Adrenal gland (tissue), 19 donors: ENCODE measurements at regions of chr12 and their contacts with region 1.

Region 1: DNA sequence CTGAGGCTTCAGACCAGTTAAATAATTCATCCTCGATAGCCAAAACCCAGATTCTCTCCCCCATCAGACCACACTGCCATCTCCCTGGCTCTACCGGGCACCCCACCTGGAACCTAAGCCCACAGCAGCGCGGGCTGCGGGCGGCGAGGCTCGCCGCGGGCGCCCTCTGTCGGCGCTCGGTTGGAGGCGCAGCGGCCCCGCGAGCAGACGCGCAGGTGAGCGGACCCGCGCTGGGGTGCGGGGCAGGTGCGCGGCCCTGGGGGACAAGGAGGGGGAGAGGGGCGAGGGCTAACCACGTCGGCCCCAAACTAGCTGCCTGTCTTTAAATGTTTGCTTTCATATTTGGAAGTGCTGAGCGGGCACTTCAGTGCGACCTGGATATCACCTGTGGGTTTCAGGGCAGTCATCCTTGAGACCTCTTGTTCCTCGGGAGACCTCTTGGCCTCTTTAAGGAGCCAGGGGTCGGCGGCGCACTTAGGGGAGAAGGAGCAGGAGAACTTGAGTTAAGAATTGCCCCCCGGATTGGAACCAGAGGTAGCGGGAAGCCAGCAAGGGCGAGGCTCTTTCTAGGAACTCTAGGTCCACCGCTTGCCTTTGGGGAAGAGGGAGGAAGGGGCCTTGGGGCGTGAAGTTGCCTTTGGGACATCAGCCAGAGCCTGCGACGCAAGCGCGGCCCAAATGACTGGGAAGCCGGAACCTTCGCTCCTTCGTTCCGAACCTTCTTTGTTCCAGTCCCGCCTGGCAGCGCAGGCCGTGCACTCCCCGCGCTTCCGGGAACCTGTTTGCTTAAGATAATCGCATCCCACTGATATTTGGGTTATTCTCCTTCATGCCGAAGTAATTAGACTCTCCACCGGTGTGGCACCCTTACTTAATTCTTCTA is 78.7 kb downstream of the NEDD1 start:
- DNase-seq: peak in 3 of 7 donors; percentile 7 to 17 (median 11)
- H3K4me3 ChIP-seq: peak overlapping the region in 1 of 4 donors; percentile 44
- H3K27ac ChIP-seq: no peak overlapping the region
- H3K4me1 ChIP-seq: peaks cover 0 to 9% of the 10 kb centered on the region in 2 donors
- H3K27me3 ChIP-seq: peaks cover 7% of the 10 kb centered on the region
- CTCF ChIP-seq: peak; percentile 22 to 86 (median 42)
- POLR2A ChIP-seq: no peak

Region 2: GRCh38 chr12:96578526-96579125 is 407.1 kb before region 1 on chr12:
- intact Hi-C with region 1: loop called in 1 of 2 experiments (anchors 5 kb)
- DNase-seq: no peak
- H3K4me3 ChIP-seq: no peak overlapping the region
- H3K27ac ChIP-seq: no peak overlapping the region
- H3K4me1 ChIP-seq: no peaks in the 10 kb centered on the region
- H3K27me3 ChIP-seq: no peaks in the 10 kb centered on the region
- CTCF ChIP-seq: peak; percentile 28 to 68 (median 54)
- POLR2A ChIP-seq: no peak

Region 3: DNA sequence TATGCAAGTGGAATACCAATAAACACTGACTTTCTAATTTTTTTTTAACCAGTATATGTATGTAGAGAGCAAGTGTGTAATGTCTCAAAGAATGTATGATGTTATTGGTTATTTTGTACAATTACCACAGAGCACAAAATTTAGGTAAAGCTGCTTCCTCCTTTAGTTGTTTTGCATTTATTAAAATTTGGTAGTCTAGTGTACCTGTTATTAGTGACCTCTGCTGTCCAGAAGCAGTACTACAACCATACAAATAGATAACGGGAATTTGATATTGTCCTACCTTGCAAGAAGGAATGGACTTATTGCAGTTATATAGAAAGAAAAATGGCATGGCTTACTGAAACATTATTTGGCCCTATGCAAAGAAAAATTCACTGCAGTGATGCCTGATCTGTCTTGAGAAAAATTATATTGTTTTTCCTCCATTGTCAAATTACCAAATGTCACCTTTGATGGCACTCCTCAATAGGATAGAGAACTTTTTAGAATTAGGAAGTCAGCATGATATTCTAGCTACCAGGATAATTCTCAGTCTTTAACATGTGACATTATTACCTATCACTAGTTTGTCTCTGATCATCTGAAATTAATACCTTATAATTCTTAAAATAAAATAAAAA is 323.0 kb after region 1 on chr12:
- intact Hi-C with region 1: loop called (anchors 5 to 10 kb)
- DNase-seq: peak in 3 of 7 donors; percentile 7 to 15 (median 8)
- H3K4me3 ChIP-seq: no peak overlapping the region
- H3K27ac ChIP-seq: no peak overlapping the region
- H3K4me1 ChIP-seq: no peaks in the 10 kb centered on the region
- H3K27me3 ChIP-seq: peaks cover 5% of the 10 kb centered on the region
- CTCF ChIP-seq: peak; percentile 41 to 82 (median 67)
- POLR2A ChIP-seq: no peak

Region 4: DNA sequence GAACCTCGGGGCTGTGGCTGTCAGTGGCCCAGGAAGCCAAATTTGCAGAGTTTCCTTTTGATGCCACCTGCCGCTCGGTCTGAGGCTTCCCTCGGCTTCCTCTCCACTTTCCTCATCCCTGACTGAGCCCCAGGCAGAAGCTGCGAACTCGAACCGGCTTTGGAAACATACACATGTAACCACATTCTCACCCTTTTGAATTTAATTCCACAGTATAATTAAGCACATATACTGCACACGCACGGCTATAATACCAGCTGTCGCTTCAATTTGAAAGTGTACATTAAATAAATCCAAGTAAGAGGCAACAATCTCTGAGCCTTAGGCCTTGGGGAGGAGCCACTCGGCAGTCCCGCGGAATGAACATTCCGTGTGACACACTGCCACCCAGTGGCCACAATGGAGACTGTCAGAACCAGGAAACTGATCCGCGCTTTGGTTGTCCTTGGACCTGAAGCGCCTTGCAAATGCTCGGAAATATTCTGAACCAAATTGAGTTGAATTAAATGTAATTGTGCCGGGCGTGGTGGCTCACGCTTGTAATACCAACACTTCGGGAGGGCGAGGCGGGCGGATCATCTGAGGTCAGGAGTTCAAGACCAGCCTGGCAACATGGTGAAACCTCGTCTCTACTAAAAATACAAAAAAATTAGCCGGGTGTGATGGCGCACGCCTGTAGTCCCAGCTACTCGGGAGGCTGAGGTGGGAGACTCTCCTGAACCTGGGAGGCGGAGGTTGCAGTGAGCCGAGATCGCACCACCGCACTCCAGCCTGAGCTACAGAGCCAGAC is 1411.8 kb after region 1 on chr12:
- intact Hi-C with region 1: loop called in 1 of 2 experiments (anchors 10 kb)
- DNase-seq: peak; percentile 76 to 93 (median 84)
- H3K4me3 ChIP-seq: peak overlapping the region in 1 of 4 donors; percentile 52
- H3K27ac ChIP-seq: no peak overlapping the region
- H3K4me1 ChIP-seq: peaks cover 4 to 7% of the 10 kb centered on the region in 2 donors
- H3K27me3 ChIP-seq: no peaks in the 10 kb centered on the region
- CTCF ChIP-seq: peak; percentile 80 to 94 (median 85)
- POLR2A ChIP-seq: no peak